Dendritic cell treated with granulocyte-macrophage colony-stimulating factor and Interleukin-4, amounts not matched to agents 40 ng/mL and 50 ng/mL, for 4 days (primary cell): ENCODE measurements at regions of chr2 and their contacts with region 1.

Region 1: DNA sequence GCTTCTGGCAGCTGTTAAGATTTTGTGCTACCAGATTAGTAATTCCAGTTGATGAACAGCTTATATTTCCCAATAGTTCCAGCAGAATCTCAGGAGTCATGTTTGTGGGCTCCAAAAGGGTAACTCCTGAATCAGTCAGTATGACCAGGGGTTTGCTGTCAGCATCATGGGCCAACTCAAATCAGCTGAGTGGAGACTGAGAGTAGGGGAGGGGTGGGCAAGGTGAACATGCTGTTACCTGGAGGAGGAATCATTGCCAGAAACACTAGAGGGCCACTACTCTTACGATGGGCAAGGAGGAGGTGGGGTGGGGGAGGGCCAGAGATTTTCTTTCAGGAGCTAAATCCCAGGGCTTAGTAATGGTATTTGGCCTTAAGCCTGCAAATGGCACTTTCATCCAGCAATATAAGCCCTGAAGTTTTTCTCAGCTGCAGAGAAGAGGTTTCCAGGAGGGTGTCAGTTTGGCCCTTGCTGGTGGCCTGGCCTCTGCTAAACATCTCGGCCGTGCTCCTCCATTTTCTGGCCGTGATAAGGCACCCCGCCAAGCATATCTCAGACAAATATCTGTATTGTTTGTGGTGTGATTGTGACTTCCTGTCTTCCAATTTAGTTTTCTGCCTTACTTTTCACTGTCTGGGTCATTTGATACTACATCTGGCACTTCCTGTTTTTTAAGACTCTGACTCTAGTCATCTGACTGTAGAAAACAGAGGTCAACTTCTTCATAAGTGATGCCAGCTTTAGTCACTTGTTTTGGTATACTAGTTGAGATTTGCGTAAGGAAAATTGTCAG is 120.5 kb upstream of the CXCR4 start:
- H3K4me3 Mint-ChIP-seq: peak overlapping the region; percentile 13
- H3K27ac Mint-ChIP-seq: peak overlapping the region; percentile 90
- H3K4me1 Mint-ChIP-seq: peaks cover 70% of the 10 kb centered on the region
- H3K27me3 Mint-ChIP-seq: no peaks in the 10 kb centered on the region

Region 2: GRCh38 chr2:136255648-136256463 is 17.4 kb after region 1 on chr2:
- intact Hi-C with region 1: loop called (anchors 1 kb)
- H3K4me3 Mint-ChIP-seq: no peak overlapping the region
- H3K27ac Mint-ChIP-seq: peak overlapping the region; percentile 79
- H3K4me1 Mint-ChIP-seq: peaks cover 48% of the 10 kb centered on the region
- H3K27me3 Mint-ChIP-seq: no peaks in the 10 kb centered on the region